Mammary epithelial cell (primary cell): ENCODE measurements at regions of chr14 and their contacts with region 1.

Region 1: GRCh38 chr14:21455911-21456667 is at the start of gene CHD8:
- DNase-seq: peak; percentile 100
- H3K4me3 ChIP-seq: peak within 1 kb of the TSS; percentile 75 to 93 (median 93)
- H3K27ac ChIP-seq: peak within 1 kb of the TSS; percentile 87
- H3K4me1 ChIP-seq: peaks cover 12% of the 10 kb centered on the region
- H3K27me3 ChIP-seq: no peaks in the 10 kb centered on the region
- CTCF ChIP-seq: peak; percentile 45 to 69
- total RNA-seq, gene CHD8: 69.2 to 76.0 TPM

Region 2: GRCh38 chr14:21038441-21039422 is 417.4 kb before region 1 on chr14:
- CTCF ChIA-PET with region 1: no interaction called
- dilution Hi-C with region 1: no loop called
- in situ Hi-C with region 1: no loop called
- intact Hi-C with region 1: no loop called
- DNase-seq: peak; percentile 33
- H3K4me3 ChIP-seq: no peak overlapping the region
- H3K27ac ChIP-seq: no peak overlapping the region
- H3K4me1 ChIP-seq: peaks cover 51% of the 10 kb centered on the region
- H3K27me3 ChIP-seq: no peaks in the 10 kb centered on the region
- CTCF ChIP-seq: no peak

Region 3: DNA sequence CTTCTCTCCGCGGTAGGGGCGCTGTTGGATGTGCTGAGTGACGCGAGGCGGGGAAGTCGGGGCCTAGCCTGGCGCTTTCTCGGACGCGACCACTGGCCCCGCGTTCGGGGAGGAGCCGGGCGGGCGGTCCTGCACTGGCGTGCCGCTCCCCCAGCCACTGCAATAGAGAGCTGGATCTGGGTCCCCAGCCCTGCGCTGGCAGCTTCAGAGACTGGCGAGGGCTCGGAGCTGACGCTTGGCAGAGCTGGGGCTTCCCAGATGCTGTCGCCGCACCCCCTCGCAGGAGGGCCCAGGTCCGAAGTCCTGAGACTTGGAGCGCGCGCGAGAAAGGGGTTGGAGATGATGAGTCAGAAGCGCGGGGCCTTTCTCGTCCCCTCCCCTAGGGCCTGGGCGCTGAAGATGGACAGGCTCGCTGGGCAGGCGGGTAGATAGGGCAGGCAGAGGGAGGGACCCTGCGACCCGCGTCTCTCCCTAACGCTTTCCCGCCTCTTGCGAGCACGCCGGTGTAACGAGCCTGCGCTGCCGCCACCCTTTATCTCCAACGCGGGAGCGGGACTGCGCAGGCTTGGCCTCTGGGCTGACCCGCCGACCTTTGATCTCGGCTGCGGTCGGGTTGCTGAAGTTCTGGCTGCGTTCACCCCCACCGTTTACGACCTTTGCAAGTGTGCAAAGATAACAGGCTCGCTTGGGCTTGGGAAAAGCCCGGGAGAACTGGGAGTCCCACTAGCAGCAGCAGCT is 352.2 kb before region 1 on chr14:
- CTCF ChIA-PET with region 1: no interaction called
- dilution Hi-C with region 1: no loop called
- in situ Hi-C with region 1: no loop called
- intact Hi-C with region 1: loop called (anchors 10 kb)
- DNase-seq: peak; percentile 94
- H3K4me3 ChIP-seq: peak overlapping the region; percentile 32 to 85 (median 58)
- H3K27ac ChIP-seq: peak overlapping the region; percentile 86
- H3K4me1 ChIP-seq: peaks cover 62% of the 10 kb centered on the region
- H3K27me3 ChIP-seq: no peaks in the 10 kb centered on the region
- CTCF ChIP-seq: peak; percentile 73 to 86

Region 4: DNA sequence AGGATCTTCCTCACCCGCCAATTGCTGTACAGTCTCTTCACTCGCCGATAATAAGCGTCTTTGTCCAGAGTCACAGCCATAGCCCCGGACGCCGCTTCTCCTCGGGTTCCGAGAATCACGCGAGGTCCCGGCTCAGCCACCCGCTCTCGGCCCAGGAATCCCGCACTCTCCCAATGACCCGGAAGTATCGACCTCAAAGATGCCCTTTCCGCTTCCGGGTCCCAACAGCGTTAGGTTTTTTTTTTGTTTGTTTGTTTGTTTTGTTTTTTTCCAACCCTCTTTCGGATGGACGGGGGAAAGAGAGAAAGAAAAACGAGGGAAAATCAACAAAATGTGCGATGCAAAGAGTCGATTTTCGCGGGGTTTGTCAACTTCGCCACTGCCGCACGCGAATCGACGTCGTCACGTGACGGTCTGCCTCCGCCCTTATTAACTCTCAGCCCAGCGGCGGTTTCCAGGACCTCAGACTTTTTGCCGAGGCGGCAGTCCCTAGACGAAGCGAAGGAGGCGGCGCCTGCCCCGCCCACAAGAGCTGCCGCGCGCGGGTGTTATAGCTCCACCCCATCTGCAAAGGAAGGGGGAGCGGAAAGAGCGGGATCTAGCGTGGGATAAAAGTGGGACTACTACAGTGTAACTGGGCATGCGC is 72.1 kb before region 1 on chr14 and contains the start of gene SUPT16H:
- CTCF ChIA-PET with region 1: no interaction called
- dilution Hi-C with region 1: no loop called
- in situ Hi-C with region 1: no loop called
- intact Hi-C with region 1: loop called (anchors 1 kb)
- DNase-seq: peak; percentile 91
- H3K4me3 ChIP-seq: peak within 1 kb of the TSS; percentile 78 to 96 (median 79)
- H3K27ac ChIP-seq: peak within 1 kb of the TSS; percentile 96
- H3K4me1 ChIP-seq: peaks cover 8% of the 10 kb centered on the region
- H3K27me3 ChIP-seq: no peaks in the 10 kb centered on the region
- CTCF ChIP-seq: no peak
- total RNA-seq, gene SUPT16H: 58.3 to 87.2 TPM

Region 5: DNA sequence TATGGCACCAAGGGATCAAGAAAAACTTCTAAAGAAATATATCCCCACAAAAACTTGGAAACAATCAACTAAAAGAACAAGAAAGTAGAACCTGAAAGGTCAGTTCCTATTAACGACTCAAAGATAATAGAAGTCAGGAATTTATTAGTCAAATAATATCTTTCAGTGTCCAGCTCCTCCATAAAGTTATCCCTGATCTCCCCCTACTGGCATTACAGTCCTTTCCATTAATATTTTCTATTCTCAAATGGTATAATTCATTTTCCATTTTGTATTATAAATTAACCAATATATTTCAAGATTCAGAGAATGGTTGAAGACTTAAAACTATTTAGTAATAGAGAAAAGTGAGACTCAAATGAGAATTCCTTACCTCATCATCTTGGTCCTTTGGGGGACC is 60.6 kb before region 1 on chr14:
- CTCF ChIA-PET with region 1: no interaction called
- dilution Hi-C with region 1: no loop called
- in situ Hi-C with region 1: no loop called
- intact Hi-C with region 1: no loop called
- DNase-seq: no peak
- H3K4me3 ChIP-seq: no peak overlapping the region
- H3K27ac ChIP-seq: no peak overlapping the region
- H3K4me1 ChIP-seq: no peaks in the 10 kb centered on the region
- H3K27me3 ChIP-seq: no peaks in the 10 kb centered on the region
- CTCF ChIP-seq: peak in 1 of 2 donors; percentile 15

Region 6: GRCh38 chr14:21476925-21477681 is 21.0 kb after region 1 on chr14 and contains the starts of genes RAB2B and TOX4:
- CTCF ChIA-PET with region 1: interaction called, 3 read pairs
- dilution Hi-C with region 1: no loop called
- in situ Hi-C with region 1: no loop called
- intact Hi-C with region 1: loop called (anchors 1 kb)
- DNase-seq: peak; percentile 97
- H3K4me3 ChIP-seq: peak within 1 kb of the TSS; percentile 76 to 92 (median 77)
- H3K27ac ChIP-seq: peak within 1 kb of the TSS; percentile 83
- H3K4me1 ChIP-seq: peaks cover 5% of the 10 kb centered on the region
- H3K27me3 ChIP-seq: no peaks in the 10 kb centered on the region
- CTCF ChIP-seq: peak; percentile 89 to 100
- total RNA-seq, gene RAB2B: 17.6 to 21.8 TPM
- total RNA-seq, gene TOX4: 37.7 to 75.8 TPM

Region 7: DNA sequence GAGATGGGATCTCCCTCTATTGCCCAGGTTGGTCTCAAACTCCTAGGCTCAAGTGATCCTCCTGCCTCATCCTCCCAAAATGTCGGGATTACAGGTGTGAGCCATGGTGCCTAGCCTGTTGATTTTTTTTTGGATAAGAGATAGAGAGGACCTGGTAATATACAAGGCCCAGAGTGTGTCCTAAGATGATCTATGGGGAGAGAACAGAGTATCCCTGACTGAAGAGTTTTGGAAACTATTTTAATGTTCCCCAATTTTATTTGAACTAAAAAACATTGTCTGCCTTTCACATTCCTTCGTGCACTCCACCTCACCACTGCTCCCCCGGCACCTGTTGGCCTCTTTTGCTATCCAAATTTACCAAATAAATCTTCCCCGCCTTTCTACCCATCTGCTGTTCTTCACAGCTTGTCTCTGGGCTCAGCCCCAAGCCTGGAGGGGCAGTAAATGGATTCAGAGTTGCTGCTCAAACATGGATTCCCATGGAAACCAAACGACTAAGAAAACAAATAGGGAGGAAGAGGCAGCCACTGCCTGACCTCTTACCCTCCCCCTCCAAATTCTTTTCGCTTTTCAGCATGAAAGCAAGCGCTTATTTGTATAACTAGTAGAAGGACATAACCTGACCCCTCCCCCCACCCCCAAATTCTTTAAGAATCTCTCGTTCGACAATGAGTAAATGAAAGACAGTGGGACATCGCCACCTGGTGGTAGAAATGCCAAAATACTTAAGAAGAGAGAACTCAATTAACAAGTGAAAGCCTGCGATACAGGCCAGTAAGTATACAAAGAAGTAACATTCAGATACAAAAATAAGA is 101.2 kb after region 1 on chr14:
- CTCF ChIA-PET with region 1: interaction called, 5 read pairs
- dilution Hi-C with region 1: no loop called
- in situ Hi-C with region 1: no loop called
- intact Hi-C with region 1: loop called (anchors 1 kb)
- DNase-seq: peak; percentile 65
- H3K4me3 ChIP-seq: peak overlapping the region in 2 of 3 experiments; percentile 33 to 42
- H3K27ac ChIP-seq: peak overlapping the region; percentile 28
- H3K4me1 ChIP-seq: no peaks in the 10 kb centered on the region
- H3K27me3 ChIP-seq: no peaks in the 10 kb centered on the region
- CTCF ChIP-seq: peak; percentile 61 to 68